BJ (cell line): ENCODE measurements at regions of chr20 and their contacts with region 1.

Region 1: DNA sequence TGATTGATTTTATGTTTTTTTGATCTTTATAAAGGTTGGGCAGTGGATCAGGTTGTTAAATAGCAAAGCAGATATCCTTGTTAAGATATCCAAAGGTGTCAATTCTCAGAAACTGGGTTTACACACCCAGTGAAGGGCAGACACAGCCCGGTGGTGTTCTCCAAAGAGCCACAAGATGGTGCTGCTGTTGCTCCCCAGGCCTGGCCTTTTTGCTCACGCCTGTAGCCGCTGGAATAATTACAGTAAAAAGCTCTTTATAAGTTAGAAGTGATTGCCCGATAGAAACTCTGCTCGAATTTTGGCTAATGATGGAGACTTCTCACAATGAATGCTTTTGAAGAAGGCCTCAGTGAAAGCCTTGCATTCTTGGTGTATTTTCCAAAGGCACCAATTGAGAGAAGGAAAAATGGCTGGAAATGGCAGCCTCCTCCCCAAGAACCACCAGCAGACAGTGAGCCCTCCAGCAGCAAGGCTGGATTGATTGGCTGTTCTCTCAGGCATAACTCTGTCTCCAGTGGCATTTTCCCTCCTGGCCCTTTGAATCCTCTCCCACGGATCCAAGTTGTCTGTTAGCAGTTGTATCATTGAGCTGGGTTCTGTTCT is 120.5 kb upstream of the CHD6 start:
- DNase-seq: no peak
- H3K4me3 ChIP-seq: no peak overlapping the region
- H3K27me3 ChIP-seq: peaks cover 2% of the 10 kb centered on the region; the same call in 1 of the 2 replicates
- CTCF ChIP-seq: peak; percentile 93

Region 2: GRCh38 chr20:41726727-41727126 is 12.0 kb before region 1 on chr20:
- CTCF ChIA-PET with region 1: interaction called, 24 read pairs
- POLR2A ChIA-PET with region 1: no interaction called
- DNase-seq: no peak
- H3K4me3 ChIP-seq: no peak overlapping the region
- H3K27me3 ChIP-seq: no peaks in the 10 kb centered on the region
- CTCF ChIP-seq: no peak